ENCODE measurements at regions of chr4 and their contacts with region 1.

Region 1: DNA sequence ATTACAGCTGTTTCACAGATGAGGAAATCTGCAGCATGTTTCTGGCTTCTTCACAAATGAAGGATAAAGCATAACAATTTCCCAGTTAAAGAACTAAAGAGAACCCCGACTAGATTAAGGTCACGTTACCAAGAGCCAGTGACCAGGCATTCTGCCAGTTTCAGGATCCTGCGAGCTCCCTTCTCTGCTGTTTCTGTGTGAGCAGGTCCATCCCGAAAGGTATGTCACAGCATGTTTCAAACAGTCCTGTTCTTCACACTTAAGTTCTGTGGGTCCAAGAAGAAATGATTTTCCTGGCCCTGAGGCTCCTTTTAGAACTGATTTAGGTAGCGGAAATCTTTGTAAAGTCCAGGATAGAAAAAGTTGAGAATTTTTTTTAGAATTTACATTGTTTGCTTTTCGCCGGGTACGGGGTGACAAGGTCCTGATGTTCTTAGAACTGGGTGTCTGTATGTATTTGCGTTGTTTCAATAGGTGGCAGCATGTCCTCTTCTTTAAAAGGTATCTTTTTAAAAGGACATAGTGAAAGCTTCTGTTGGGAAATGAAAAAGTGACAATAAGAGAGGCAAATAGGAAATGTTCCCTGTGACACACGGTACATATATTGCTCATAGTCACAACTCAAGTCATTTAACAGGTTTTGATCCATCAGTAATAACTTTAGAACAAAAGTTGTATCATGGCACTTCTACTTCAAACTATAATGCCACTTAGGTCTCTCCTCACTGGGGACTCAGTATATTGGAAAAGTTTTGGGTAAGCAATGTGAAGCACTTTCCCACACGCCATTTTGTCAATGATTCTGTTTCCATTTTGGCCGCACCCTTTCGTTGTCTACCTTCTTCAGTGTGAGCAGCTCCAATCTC is 18.4 kb downstream of the IL21 start:
- DNase-seq: no peak
- H3K4me3 ChIP-seq: no peak overlapping the region
- H3K27ac ChIP-seq: no peak overlapping the region
- H3K27me3 ChIP-seq: peaks cover 0 to 18% (median 0%) of the 10 kb centered on the region in 45 donors
- CTCF ChIP-seq: peak in 47 of 56 donors; percentile 11 to 69 (median 44)

Region 2: GRCh38 chr4:122716825-122717448 is 114.4 kb after region 1 on chr4:
- intact Hi-C with region 1: loop called (anchors 5 to 10 kb)
- DNase-seq: peak in 7 of 10 donors; percentile 11 to 73 (median 58)
- H3K4me3 ChIP-seq: no peak overlapping the region
- H3K27ac ChIP-seq: no peak overlapping the region
- H3K27me3 ChIP-seq: no peaks in the 10 kb centered on the region
- CTCF ChIP-seq: peak; percentile 22 to 84 (median 69)

Region 3: DNA sequence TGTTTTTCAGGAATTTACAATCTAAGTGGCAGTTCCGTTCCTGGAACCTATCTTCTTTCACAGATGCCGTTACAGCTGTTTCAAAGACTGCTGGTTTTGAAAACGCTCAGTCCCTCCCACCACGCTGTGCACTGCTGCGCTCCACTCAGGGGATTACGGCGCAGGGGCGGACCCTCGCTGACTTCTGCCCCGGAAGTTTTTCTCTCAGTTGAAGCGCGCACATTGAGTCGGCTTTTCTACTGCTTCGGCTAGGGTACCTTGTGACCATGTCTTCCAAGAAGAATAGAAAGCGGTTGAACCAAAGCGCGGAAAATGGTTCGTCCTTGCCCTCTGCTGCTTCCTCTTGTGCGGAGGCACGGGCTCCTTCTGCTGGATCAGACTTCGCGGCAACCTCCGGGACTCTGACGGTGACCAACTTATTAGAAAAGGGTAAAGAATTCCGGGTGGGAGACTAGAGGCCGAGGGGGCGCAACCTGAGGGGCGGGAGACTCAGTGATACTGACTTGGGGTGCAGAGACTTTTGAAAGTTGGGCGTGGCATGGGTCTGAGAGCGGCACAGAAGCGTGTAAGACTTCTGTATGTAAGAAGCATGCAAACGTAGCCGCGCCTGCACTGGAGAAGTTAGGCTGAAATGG is 320.5 kb after region 1 on chr4:
- intact Hi-C with region 1: loop called in 1 of 2 experiments (anchors 10 kb)
- DNase-seq: peak; percentile 81 to 94 (median 92)
- H3K4me3 ChIP-seq: peak overlapping the region; percentile 70 to 99 (median 89)
- H3K27ac ChIP-seq: peak overlapping the region in 57 of 59 donors; percentile 50 to 94 (median 83)
- H3K27me3 ChIP-seq: no peaks in the 10 kb centered on the region
- CTCF ChIP-seq: peak in 9 of 56 donors; percentile 2 to 26 (median 16)

Region 4: GRCh38 chr4:122930862-122931261 is 328.4 kb after region 1 on chr4:
- intact Hi-C with region 1: loop called (anchors 5 to 10 kb)
- DNase-seq: no peak
- H3K4me3 ChIP-seq: no peak overlapping the region
- H3K27ac ChIP-seq: no peak overlapping the region
- H3K27me3 ChIP-seq: no peaks in the 10 kb centered on the region
- CTCF ChIP-seq: peak; percentile 44 to 88 (median 65)

Measured in dorsolateral prefrontal cortex (tissue), 120 donors.